ENCODE measurements at regions of chr5 and their contacts with region 1.

Region 1: GRCh38 chr5:98679963-98680362 is 93.5 kb upstream of the RGMB start:
- DNase-seq: no peak
- H3K4me3 ChIP-seq: no peak overlapping the region
- H3K27ac ChIP-seq: no peak overlapping the region
- H3K4me1 ChIP-seq: no peaks in the 10 kb centered on the region
- H3K27me3 ChIP-seq: no peaks in the 10 kb centered on the region
- CTCF ChIP-seq: no peak

Region 2: DNA sequence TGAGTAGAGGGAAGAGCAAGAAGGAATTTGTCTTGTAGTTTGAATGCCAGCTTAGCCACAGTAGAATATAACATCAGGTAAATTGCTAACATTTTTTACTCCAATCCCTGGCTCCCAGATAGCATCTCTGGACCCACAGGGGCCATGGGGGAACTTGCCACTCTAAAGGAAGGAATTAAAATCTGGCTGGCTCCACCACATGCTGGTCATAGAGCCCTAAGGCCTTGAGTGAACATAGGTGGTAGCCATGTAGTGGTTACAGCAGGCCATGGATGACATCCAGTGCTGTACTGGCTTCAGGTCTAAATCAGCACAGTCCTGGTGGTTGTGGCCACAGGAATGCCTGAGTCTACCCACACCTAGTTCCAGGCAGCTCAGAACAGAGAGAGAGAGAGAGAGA is 16.4 kb before region 1 on chr5:
- CTCF ChIA-PET with region 1: no interaction called
- POLR2A ChIA-PET with region 1: no interaction called
- intact Hi-C with region 1: loop called (anchors 1 kb)
- DNase-seq: no peak
- H3K4me3 ChIP-seq: no peak overlapping the region
- H3K27ac ChIP-seq: no peak overlapping the region
- H3K4me1 ChIP-seq: no peaks in the 10 kb centered on the region
- H3K27me3 ChIP-seq: no peaks in the 10 kb centered on the region
- CTCF ChIP-seq: no peak

Region 3: DNA sequence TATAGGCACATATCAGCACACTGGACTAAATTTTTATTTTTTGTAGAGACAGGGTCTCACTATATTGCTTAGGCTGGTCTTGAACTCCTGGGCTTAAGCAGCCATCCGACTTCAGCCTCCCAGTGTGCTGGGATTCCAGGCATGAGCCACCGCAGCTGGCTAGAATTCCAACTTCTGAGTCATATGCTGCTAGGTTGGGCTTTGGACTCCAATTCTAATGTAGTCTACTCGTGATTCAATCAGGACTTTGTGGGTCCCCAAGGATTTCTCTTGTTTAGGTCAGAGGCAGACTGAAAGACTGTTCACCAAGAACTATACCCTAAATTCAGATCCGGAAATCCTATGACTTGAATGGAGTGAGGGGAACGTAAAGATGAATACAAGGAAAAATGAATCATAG is 317.0 kb after region 1 on chr5:
- CTCF ChIA-PET with region 1: no interaction called
- POLR2A ChIA-PET with region 1: no interaction called
- intact Hi-C with region 1: no loop called
- DNase-seq: no peak
- H3K4me3 ChIP-seq: no peak overlapping the region
- H3K27ac ChIP-seq: no peak overlapping the region
- H3K4me1 ChIP-seq: peaks cover 6% of the 10 kb centered on the region; the same call in 1 of the 2 replicates
- H3K27me3 ChIP-seq: no peaks in the 10 kb centered on the region
- CTCF ChIP-seq: no peak

Measured in PC-9 (cell line).